ENCODE measurements at regions of chr20 and their contacts with region 1.

Region 1: DNA sequence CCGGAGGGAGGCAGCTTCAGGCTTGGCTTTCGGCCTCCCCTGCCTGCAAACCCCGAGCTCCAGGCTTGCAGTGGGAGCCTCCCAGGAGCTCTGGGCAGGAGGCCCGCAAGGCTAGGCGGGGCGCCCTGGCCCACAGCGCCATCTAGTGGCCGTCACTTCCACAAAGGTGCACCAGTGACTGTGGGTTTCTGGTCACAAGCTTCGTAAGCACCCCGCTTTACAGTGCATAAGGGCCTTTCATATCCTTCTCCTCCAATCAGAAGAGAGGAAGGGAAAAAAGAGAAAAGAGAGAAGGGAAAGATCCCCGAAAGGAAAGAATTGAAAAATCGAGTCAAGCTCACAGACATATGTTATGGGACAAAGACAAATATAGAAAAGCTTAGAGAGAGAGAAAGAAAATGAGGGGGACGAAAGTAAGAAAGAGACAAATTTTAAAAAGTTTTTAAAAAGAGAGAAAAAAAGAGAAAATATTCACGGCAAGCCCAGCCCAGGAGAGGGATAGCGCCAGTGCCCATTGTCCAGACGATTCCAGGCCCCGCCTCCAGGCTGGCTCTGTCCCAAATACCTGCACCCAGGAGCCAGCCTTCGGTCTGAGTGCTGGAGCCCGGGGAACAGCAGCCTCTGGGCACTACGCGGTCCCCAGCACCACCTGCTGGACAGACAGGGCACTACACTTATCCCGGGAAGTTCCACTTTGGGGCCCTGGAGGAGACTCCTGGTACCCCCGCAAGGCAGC is 207.1 kb downstream of the PREX1 start:
- DNase-seq: peak; percentile 80
- H3K4me3 ChIP-seq: peak overlapping the region; percentile 31 to 40 (median 32)
- H3K27ac ChIP-seq: peak overlapping the region; percentile 62
- H3K4me1 ChIP-seq: peaks cover 23% of the 10 kb centered on the region
- H3K27me3 ChIP-seq: no peaks in the 10 kb centered on the region
- CTCF ChIP-seq: peak; percentile 90 to 98

Region 2: GRCh38 chr20:47663333-47664067 is 957.2 kb before region 1 on chr20:
- CTCF ChIA-PET with region 1: no interaction called
- dilution Hi-C with region 1: no loop called
- in situ Hi-C with region 1: no loop called
- intact Hi-C with region 1: loop called (anchors 1 kb)
- DNase-seq: peak; percentile 67
- H3K4me3 ChIP-seq: no peak overlapping the region
- H3K27ac ChIP-seq: no peak overlapping the region
- H3K4me1 ChIP-seq: peaks cover 24% of the 10 kb centered on the region
- H3K27me3 ChIP-seq: no peaks in the 10 kb centered on the region
- CTCF ChIP-seq: peak; percentile 92 to 95

Region 3: GRCh38 chr20:47785854-47786764 is 834.6 kb before region 1 on chr20:
- CTCF ChIA-PET with region 1: interaction called, 5 read pairs
- dilution Hi-C with region 1: loop called (anchors 5 kb)
- in situ Hi-C with region 1: loop called (anchors 10 kb)
- intact Hi-C with region 1: loop called (anchors 1 kb)
- DNase-seq: peak; percentile 79
- H3K4me3 ChIP-seq: peak overlapping the region; percentile 56 to 62 (median 56)
- H3K27ac ChIP-seq: peak overlapping the region; percentile 57
- H3K4me1 ChIP-seq: peaks cover 44% of the 10 kb centered on the region
- H3K27me3 ChIP-seq: no peaks in the 10 kb centered on the region
- CTCF ChIP-seq: peak; percentile 56 to 80

Region 4: DNA sequence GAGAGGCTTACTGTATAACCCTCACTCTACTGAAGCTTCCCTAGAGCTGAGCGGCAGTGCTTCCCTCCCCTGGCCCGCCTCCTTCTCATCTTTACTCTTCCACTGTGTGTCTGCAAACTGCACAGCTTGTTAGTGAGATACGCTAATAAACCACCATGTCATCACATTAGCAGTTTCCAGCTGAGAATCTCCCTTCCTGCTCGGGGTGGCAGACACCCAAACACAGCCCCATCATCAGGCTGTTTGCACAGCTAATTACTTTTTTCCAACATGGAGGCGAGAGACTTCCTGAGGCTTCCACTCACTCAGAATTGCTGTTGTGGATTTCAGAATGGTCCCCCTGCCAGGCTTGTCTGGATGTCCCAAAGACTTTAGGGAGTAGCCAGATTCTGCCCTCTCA is 390.5 kb before region 1 on chr20:
- CTCF ChIA-PET with region 1: no interaction called
- dilution Hi-C with region 1: loop called (anchors 5 kb)
- in situ Hi-C with region 1: no loop called
- intact Hi-C with region 1: no loop called
- DNase-seq: no peak
- H3K4me3 ChIP-seq: no peak overlapping the region
- H3K27ac ChIP-seq: no peak overlapping the region
- H3K4me1 ChIP-seq: no peaks in the 10 kb centered on the region
- H3K27me3 ChIP-seq: no peaks in the 10 kb centered on the region
- CTCF ChIP-seq: no peak

Region 5: DNA sequence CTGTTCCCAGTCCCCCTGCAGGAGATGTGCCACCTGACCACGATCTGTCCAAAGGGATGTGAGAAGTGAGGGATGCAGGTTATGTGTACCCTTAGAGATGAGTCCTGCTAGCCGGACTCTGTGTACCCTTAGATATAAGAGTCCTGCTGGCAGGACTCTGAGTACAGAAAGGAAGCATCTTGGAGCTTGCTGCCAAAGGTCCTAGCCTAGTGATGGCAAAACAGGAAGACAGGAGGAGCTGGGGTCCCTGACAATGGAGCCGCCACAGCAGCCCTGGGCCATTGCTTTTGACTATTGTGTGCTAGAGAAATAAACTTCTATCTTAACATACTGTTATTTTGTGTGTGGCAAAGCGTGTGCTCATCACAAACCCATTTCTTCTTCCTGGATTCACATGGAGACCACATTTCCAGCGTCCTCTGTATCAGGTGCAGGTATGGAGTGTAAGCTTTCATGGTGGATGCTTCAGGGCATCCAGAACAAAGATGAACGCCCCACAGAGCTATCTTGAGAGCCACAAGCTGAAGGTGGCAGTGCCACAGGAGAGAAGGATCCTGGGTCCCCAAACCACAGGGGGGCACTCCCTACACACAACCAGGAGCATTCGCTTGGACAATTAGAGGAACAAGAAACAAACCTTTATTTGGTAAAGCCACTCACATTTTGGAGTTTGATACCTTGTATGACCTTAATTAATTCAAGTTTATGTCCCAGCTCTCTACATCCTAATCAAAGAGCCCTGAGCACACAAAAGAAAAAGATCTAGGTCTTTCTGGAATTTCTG is 199.3 kb before region 1 on chr20:
- CTCF ChIA-PET with region 1: interaction called, 21 read pairs
- dilution Hi-C with region 1: no loop called
- in situ Hi-C with region 1: no loop called
- intact Hi-C with region 1: loop called (anchors 1 kb)
- DNase-seq: no peak
- H3K4me3 ChIP-seq: no peak overlapping the region
- H3K27ac ChIP-seq: no peak overlapping the region
- H3K4me1 ChIP-seq: no peaks in the 10 kb centered on the region
- H3K27me3 ChIP-seq: no peaks in the 10 kb centered on the region
- CTCF ChIP-seq: peak in 1 of 2 donors; percentile 30

Region 6: DNA sequence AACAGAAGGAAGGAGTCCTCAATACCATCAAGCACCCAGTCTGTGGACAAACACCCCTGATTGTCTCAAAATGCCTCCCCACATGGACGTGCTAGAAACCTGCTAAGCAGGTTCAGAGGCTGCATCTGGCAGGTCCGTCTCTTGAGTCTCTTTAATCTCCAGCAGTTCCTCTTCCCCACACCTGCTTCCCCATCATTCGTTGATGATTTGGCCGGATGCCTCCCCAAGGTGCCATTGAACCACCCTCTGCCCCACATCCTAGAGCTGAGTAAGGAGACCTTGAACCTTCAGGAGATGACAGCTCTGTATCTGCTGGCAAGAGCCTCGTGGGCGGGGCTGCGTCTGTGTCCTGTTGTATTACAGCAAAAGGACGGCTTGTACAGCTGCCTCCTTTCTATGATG is 27.9 kb after region 1 on chr20:
- CTCF ChIA-PET with region 1: no interaction called
- dilution Hi-C with region 1: no loop called
- in situ Hi-C with region 1: no loop called
- intact Hi-C with region 1: no loop called
- DNase-seq: no peak
- H3K4me3 ChIP-seq: no peak overlapping the region
- H3K27ac ChIP-seq: no peak overlapping the region
- H3K4me1 ChIP-seq: no peaks in the 10 kb centered on the region
- H3K27me3 ChIP-seq: no peaks in the 10 kb centered on the region
- CTCF ChIP-seq: no peak

Region 7: GRCh38 chr20:48921151-48921898 is 300.6 kb after region 1 on chr20 and contains the start of gene ARFGEF2:
- CTCF ChIA-PET with region 1: no interaction called
- dilution Hi-C with region 1: no loop called
- in situ Hi-C with region 1: no loop called
- intact Hi-C with region 1: no loop called
- DNase-seq: peak; percentile 85
- H3K4me3 ChIP-seq: peak within 1 kb of the TSS; percentile 67 to 79 (median 69)
- H3K27ac ChIP-seq: peak within 1 kb of the TSS; percentile 88
- H3K4me1 ChIP-seq: peaks cover 15% of the 10 kb centered on the region
- H3K27me3 ChIP-seq: no peaks in the 10 kb centered on the region
- CTCF ChIP-seq: no peak
- total RNA-seq, gene ARFGEF2: 27.7 to 36.0 TPM

Measured in mammary epithelial cell (primary cell).